WTC11 (cell line): ENCODE measurements at regions of chr6 and their contacts with region 1.

Region 1: GRCh38 chr6:32984605-32985389 is 16.4 kb downstream of the BRD2 start:
- DNase-seq: peak; percentile 94
- ATAC-seq: peak; percentile 79
- H3K4me3 Mint-ChIP-seq: no peak overlapping the region
- H3K27ac Mint-ChIP-seq: peak overlapping the region; percentile 82
- H3K4me1 Mint-ChIP-seq: peaks cover 18% of the 10 kb centered on the region
- H3K27me3 Mint-ChIP-seq: no peaks in the 10 kb centered on the region
- CTCF ChIP-seq: peak; percentile 68

Region 2: DNA sequence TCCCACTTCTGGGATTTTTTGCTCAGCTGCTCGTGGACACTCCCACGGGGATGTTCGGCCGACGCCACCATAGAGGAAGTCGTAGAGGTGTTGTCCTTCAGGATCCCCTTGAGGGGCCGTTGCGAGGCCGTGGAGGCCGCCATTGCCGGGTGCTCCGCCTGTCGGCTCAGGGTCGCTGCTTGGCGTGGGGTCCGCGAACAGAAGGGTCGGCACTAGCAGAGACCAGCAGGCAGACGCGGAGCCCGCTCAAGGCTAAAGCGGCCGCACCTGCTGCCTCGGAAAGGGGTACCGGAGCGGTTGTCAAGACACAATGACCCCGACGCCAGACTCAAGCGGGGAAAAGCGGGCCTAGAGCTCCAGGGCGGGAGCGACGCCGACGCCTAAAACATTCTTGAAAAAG is 105.1 kb before region 1 on chr6:
- CTCF ChIA-PET with region 1: interaction called, 21 read pairs
- POLR2A ChIA-PET with region 1: no interaction called
- DNase-seq: no peak
- ATAC-seq: no peak
- H3K4me3 Mint-ChIP-seq: no peak overlapping the region
- H3K27ac Mint-ChIP-seq: no peak overlapping the region
- H3K4me1 Mint-ChIP-seq: no peaks in the 10 kb centered on the region
- H3K27me3 Mint-ChIP-seq: peaks cover 12% of the 10 kb centered on the region
- CTCF ChIP-seq: no peak

Region 3: DNA sequence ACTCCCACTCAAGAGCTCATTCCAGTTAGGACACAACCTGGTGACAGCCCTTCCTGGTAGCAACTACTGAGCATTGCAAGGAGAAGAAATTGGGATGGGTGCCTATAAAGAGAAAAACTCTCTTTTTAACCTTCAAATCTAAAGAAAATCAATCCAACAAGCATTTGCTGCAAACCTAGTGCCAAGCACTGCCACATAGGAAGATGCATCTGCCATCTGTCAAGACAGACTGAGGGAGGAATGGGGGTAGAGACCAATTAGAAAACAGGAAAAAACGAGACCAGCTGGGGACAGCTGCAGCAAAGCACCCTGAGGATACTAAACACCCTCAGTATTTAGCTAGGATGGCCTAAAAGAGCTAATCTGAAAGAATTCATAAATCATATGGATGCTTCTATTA is 71.8 kb before region 1 on chr6:
- CTCF ChIA-PET with region 1: interaction called, 15 read pairs
- POLR2A ChIA-PET with region 1: no interaction called
- DNase-seq: no peak
- ATAC-seq: no peak
- H3K4me3 Mint-ChIP-seq: no peak overlapping the region
- H3K27ac Mint-ChIP-seq: no peak overlapping the region
- H3K4me1 Mint-ChIP-seq: no peaks in the 10 kb centered on the region
- H3K27me3 Mint-ChIP-seq: peaks cover 18% of the 10 kb centered on the region
- CTCF ChIP-seq: no peak

Region 4: GRCh38 chr6:32952817-32953739 is 31.7 kb before region 1 on chr6 and contains the start of gene HLA-DMA:
- CTCF ChIA-PET with region 1: interaction called, 128 read pairs
- POLR2A ChIA-PET with region 1: no interaction called
- DNase-seq: peak; percentile 84
- ATAC-seq: peak; percentile 97
- H3K4me3 Mint-ChIP-seq: peak within 1 kb of the TSS; percentile 47
- H3K27ac Mint-ChIP-seq: peak within 1 kb of the TSS; percentile 87
- H3K4me1 Mint-ChIP-seq: peaks cover 20% of the 10 kb centered on the region
- H3K27me3 Mint-ChIP-seq: no peaks in the 10 kb centered on the region
- CTCF ChIP-seq: peak; percentile 51; the same call in 1 of the 2 replicates
- total RNA-seq, gene HLA-DMA: 6.0 to 9.3 TPM (median 6.6 TPM) in 3 replicates

Region 5: GRCh38 chr6:33014841-33015634 is 30.2 kb after region 1 on chr6:
- CTCF ChIA-PET with region 1: interaction called, 13 read pairs
- POLR2A ChIA-PET with region 1: no interaction called
- DNase-seq: no peak
- ATAC-seq: peak; percentile 68
- H3K4me3 Mint-ChIP-seq: no peak overlapping the region
- H3K27ac Mint-ChIP-seq: no peak overlapping the region
- H3K4me1 Mint-ChIP-seq: peaks cover 51% of the 10 kb centered on the region
- H3K27me3 Mint-ChIP-seq: no peaks in the 10 kb centered on the region
- CTCF ChIP-seq: peak; percentile 68

Region 6: GRCh38 chr6:33172688-33173534 is 188.1 kb after region 1 on chr6:
- CTCF ChIA-PET with region 1: interaction called, 14 read pairs
- POLR2A ChIA-PET with region 1: no interaction called
- DNase-seq: peak; percentile 71
- ATAC-seq: peak; percentile 79
- H3K4me3 Mint-ChIP-seq: no peak overlapping the region
- H3K27ac Mint-ChIP-seq: no peak overlapping the region; the same call in 1 of the 2 replicates
- H3K4me1 Mint-ChIP-seq: 0 out of 2 replicates have a peak, but pooled peaks cover 3% of the 10 kb centered on the region
- H3K27me3 Mint-ChIP-seq: peaks cover 7% of the 10 kb centered on the region; the same call in 1 of the 2 replicates
- CTCF ChIP-seq: peak; percentile 51